Activated T-helper 2 cell treated with anti-CD3 and anti-CD28 coated beads, Interferon-gamma antibody, Interleukin-2, Interleukin-4, amounts not matched to agents 10 μg/mL and 5 μg/mL and 100 μg/mL, durations not matched to agents 14 hours and 24 hours and 36 hours (primary cell): ENCODE measurements at regions of chr14 and their contacts with region 1.

Region 1: DNA sequence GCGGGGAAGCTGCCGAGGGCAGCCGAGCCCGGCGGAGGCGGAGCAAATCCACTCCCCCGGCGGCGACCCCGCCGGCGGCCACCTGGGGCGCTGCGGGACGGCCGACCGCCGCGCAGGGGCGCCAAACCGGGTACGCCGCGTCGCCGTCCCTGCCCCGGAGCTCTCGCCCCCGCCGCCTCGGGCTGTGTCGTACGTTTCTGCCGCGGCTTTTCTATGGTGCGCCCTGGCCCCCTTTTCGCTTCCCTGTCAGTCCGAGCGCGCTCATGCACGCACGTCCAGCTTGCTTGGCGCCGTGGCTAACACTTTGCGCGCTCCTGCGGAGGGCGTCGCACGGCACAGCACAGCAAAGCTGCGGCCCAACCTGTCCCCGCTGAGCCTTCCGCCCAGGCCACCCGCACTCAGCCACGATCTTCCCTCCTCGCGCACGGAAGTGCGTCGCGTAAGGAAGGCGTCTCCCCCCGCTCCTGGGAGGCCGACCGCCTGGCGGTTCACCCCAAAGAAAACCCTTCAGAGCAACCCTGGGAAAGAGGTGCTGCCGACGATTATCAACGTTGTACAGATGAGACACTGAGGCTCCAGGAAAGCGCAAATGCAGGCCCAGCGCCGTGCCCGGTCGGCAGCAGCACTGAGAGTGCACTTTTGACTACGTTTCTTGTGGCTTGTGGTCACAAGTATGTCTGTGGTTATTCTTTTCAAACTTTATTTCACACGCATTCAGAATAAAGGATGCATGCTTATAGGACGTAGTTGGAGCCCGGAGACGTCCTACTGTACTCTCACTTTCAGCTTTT is at the start of gene HECTD1:
- DNase-seq: peak; percentile 85
- H3K4me3 Mint-ChIP-seq: peak within 1 kb of the TSS; percentile 86
- H3K27ac Mint-ChIP-seq: peak within 1 kb of the TSS; percentile 100
- H3K4me1 Mint-ChIP-seq: peaks cover 29% of the 10 kb centered on the region
- H3K27me3 Mint-ChIP-seq: peaks cover 2% of the 10 kb centered on the region
- total RNA-seq, gene HECTD1: 109 and 114 TPM in 2 replicates

Region 2: GRCh38 chr14:31026395-31027118 is 181.4 kb before region 1 on chr14:
- intact Hi-C with region 1: loop called (anchors 1 kb)
- DNase-seq: peak; percentile 89
- H3K4me3 Mint-ChIP-seq: peak overlapping the region; percentile 93
- H3K27ac Mint-ChIP-seq: peak overlapping the region; percentile 92
- H3K4me1 Mint-ChIP-seq: peaks cover 51% of the 10 kb centered on the region
- H3K27me3 Mint-ChIP-seq: no peaks in the 10 kb centered on the region

Region 3: GRCh38 chr14:31283578-31284252 is 75.8 kb after region 1 on chr14:
- intact Hi-C with region 1: loop called (anchors 2 kb)
- DNase-seq: no peak
- H3K4me3 Mint-ChIP-seq: no peak overlapping the region
- H3K27ac Mint-ChIP-seq: no peak overlapping the region
- H3K4me1 Mint-ChIP-seq: peaks cover 5% of the 10 kb centered on the region
- H3K27me3 Mint-ChIP-seq: no peaks in the 10 kb centered on the region

Region 4: GRCh38 chr14:31420319-31421111 is 212.6 kb after region 1 on chr14 and contains the start of gene HEATR5A:
- intact Hi-C with region 1: loop called (anchors 1 kb)
- DNase-seq: peak; percentile 90
- H3K4me3 Mint-ChIP-seq: peak within 1 kb of the TSS; percentile 95
- H3K27ac Mint-ChIP-seq: peak within 1 kb of the TSS; percentile 90
- H3K4me1 Mint-ChIP-seq: peaks cover 24% of the 10 kb centered on the region
- H3K27me3 Mint-ChIP-seq: no peaks in the 10 kb centered on the region
- total RNA-seq, gene HEATR5A: 23.1 TPM in 2 replicates

Region 5: DNA sequence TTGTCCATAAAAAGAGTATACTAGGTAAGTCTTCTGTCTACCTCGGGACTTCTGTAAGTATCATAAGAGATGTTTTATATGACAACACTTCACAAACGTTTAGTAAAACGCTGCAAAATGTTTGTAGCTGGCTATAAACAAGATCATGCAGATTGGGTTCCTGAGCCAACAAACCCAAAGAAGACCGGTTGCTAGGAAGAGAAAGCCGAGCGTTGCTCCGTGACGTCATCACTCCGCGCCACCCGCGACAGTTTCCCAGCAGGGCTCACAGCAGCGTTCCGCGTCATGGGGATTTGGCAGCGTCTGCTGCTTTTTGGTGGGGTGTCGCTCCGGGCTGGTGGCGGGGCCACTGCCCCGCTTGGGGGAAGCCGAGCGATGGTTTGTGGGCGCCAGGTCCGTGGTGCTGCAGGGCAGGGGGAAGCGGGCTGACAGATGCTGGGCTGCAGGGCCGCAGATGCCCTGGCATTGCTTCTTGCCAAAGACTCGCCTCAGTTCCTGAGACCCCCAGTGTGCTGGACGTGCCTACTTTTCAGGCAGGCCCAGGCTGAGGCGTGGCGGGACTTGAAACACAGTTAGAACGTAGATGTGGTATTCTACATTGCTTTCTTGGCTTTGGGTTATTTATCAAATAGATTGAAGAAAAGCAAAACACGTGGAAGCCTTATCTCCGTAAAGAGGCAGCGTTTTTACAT is 353.4 kb after region 1 on chr14 and contains the start of gene NUBPL:
- intact Hi-C with region 1: loop called (anchors 2 kb)
- DNase-seq: peak; percentile 96
- H3K4me3 Mint-ChIP-seq: peak within 1 kb of the TSS; percentile 90
- H3K27ac Mint-ChIP-seq: peak within 1 kb of the TSS; percentile 95
- H3K4me1 Mint-ChIP-seq: peaks cover 21% of the 10 kb centered on the region
- H3K27me3 Mint-ChIP-seq: peaks cover 8% of the 10 kb centered on the region
- total RNA-seq, gene NUBPL: 8.7 and 9.5 TPM in 2 replicates